A549 (cell line): ENCODE measurements at regions of chr15 and their contacts with region 1.

Region 1: DNA sequence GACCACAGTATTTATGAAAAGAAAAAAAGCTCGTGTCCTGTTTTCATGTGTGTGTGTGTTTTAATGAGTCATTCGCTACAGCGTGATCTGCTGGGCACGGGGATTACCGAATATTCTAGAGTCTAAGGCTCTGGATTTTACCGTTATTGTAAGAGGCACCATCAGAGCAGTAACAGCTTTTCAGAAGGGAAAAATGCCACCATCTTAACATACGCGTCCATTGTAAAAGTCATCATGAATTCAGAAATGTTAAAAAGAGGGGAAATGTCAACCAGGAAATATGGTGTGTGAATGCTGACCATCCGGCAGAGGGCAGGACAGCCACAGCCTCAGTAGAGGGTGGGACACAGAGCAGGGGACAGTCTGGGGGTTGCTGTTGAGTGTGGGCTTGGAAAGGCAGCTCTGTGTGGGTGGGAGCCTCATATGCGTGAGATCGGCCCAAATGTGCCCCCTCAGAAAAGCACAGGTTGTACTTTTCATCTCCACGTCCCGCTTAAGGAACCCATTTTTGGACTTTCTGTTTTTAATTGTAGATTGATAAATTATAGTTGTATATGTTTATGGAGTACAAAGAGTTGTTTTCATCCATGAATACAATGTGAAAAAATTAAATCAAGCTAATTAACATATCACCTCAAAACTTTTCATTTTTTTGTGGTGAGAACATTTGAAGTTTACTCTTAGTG is 69.6 kb downstream of the ASB7 start:
- DNase-seq: peak; percentile 69 to 84
- ATAC-seq: peak; percentile 97 to 99
- H3K4me3 ChIP-seq: peak overlapping the region; percentile 33
- H3K27ac ChIP-seq: peak overlapping the region; percentile 68 to 73
- H3K4me1 ChIP-seq: peaks cover 5% of the 10 kb centered on the region
- CTCF ChIP-seq: peak; percentile 95
- EP300 ChIP-seq: no peak
- POLR2A ChIP-seq: no peak
- RAD21 ChIP-seq: peak; percentile 99

Region 2: GRCh38 chr15:100580414-100580813 is 91.6 kb before region 1 on chr15:
- CTCF ChIA-PET with region 1: no interaction called
- POLR2A ChIA-PET with region 1: no interaction called
- DNase-seq: no peak
- ATAC-seq: no peak
- H3K4me3 ChIP-seq: no peak overlapping the region
- H3K27ac ChIP-seq: no peak overlapping the region
- H3K4me1 ChIP-seq: no peaks in the 10 kb centered on the region
- CTCF ChIP-seq: no peak
- EP300 ChIP-seq: no peak
- POLR2A ChIP-seq: no peak
- RAD21 ChIP-seq: no peak

Region 3: DNA sequence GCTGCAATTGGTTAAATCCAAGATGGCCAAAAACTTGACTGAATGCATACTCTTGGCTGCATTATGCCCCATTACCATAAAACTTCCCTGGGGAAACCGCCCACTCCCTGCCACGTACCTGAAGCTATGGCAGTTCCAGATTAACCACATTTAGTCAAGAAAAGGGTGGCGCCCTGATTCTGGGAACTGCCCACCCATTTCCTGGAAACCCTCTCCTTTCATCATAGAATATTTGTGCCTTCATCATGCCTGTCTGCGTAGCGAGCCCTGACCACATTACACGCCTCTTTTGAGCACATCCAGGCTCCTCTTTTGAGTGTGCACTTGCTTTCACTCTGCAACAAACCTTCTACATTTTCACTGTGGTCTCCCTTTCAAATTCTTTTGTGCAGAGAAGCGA is 75.2 kb before region 1 on chr15:
- CTCF ChIA-PET with region 1: no interaction called
- POLR2A ChIA-PET with region 1: no interaction called
- DNase-seq: no peak
- ATAC-seq: no peak
- H3K4me3 ChIP-seq: no peak overlapping the region
- H3K27ac ChIP-seq: no peak overlapping the region
- H3K4me1 ChIP-seq: peaks cover 7% of the 10 kb centered on the region; the same call in 2 of the 3 replicates
- CTCF ChIP-seq: no peak
- EP300 ChIP-seq: no peak
- POLR2A ChIP-seq: no peak
- RAD21 ChIP-seq: no peak

Region 4: GRCh38 chr15:100686725-100687473 is 14.9 kb after region 1 on chr15:
- CTCF ChIA-PET with region 1: interaction called, 29 read pairs
- POLR2A ChIA-PET with region 1: no interaction called
- DNase-seq: no peak
- ATAC-seq: no peak
- H3K4me3 ChIP-seq: no peak overlapping the region
- H3K27ac ChIP-seq: no peak overlapping the region
- H3K4me1 ChIP-seq: 0 out of 3 replicates have a peak, but pooled peaks cover 4% of the 10 kb centered on the region
- CTCF ChIP-seq: no peak
- EP300 ChIP-seq: no peak
- POLR2A ChIP-seq: no peak
- RAD21 ChIP-seq: no peak

Region 5: GRCh38 chr15:100733101-100733788 is 61.2 kb after region 1 on chr15:
- CTCF ChIA-PET with region 1: interaction called, 15 read pairs
- POLR2A ChIA-PET with region 1: no interaction called
- DNase-seq: peak in 1 of 2 experiments; percentile 36
- ATAC-seq: peak; percentile 26 to 66; a peak in 3 of 6 replicates
- H3K4me3 ChIP-seq: no peak overlapping the region
- H3K27ac ChIP-seq: peak overlapping the region in 1 of 2 experiments; percentile 52; a peak in 3 of 6 replicates
- H3K4me1 ChIP-seq: peaks cover 19% of the 10 kb centered on the region
- CTCF ChIP-seq: no peak
- EP300 ChIP-seq: no peak
- POLR2A ChIP-seq: no peak
- RAD21 ChIP-seq: no peak

Region 6: GRCh38 chr15:100842756-100843725 is 171.0 kb after region 1 on chr15:
- CTCF ChIA-PET with region 1: interaction called, 13 read pairs
- POLR2A ChIA-PET with region 1: no interaction called
- DNase-seq: no peak
- ATAC-seq: peak in 1 of 2 experiments; percentile 40; a peak in 1 of 6 replicates
- H3K4me3 ChIP-seq: no peak overlapping the region
- H3K27ac ChIP-seq: no peak overlapping the region; a peak in 1 of 6 replicates
- H3K4me1 ChIP-seq: peaks cover 6% of the 10 kb centered on the region; the same call in 1 of the 3 replicates
- CTCF ChIP-seq: no peak
- EP300 ChIP-seq: no peak
- POLR2A ChIP-seq: no peak
- RAD21 ChIP-seq: no peak

Region 7: DNA sequence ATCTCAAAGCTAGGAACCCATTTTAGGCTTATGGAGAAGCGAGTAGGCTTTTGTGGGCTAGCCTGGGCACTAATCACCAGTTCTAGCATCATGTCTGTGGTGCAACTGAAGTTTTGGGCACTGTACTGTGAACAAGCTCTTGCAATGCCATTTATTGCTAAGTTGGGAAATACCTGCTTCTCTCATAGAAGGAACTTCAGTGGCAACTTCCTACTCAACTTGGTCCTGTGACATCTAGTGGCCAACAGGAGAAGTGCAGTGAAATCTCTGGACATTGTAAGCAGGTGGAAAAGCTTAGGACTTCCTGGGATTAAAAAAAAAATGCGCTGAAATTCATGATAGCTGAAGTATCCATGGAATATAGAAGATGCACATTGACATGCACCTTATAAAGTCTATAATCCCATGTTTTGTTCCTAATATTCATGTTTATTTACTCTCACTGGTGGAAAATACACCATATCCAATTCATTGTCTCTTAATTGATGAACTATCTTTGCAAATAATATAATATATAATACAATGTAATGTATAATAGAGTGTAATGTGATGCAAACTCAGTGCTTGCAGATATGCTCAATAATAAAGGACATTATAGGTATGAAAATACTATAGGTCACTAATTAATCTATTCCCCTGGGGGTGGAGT is 201.2 kb after region 1 on chr15:
- CTCF ChIA-PET with region 1: interaction called, 117 read pairs
- POLR2A ChIA-PET with region 1: no interaction called
- DNase-seq: peak; percentile 88 to 91
- ATAC-seq: peak; percentile 72 to 87
- H3K4me3 ChIP-seq: no peak overlapping the region
- H3K27ac ChIP-seq: no peak overlapping the region
- H3K4me1 ChIP-seq: no peaks in the 10 kb centered on the region
- CTCF ChIP-seq: peak; percentile 91
- EP300 ChIP-seq: no peak
- POLR2A ChIP-seq: no peak
- RAD21 ChIP-seq: peak; percentile 80 to 89

Region 8: DNA sequence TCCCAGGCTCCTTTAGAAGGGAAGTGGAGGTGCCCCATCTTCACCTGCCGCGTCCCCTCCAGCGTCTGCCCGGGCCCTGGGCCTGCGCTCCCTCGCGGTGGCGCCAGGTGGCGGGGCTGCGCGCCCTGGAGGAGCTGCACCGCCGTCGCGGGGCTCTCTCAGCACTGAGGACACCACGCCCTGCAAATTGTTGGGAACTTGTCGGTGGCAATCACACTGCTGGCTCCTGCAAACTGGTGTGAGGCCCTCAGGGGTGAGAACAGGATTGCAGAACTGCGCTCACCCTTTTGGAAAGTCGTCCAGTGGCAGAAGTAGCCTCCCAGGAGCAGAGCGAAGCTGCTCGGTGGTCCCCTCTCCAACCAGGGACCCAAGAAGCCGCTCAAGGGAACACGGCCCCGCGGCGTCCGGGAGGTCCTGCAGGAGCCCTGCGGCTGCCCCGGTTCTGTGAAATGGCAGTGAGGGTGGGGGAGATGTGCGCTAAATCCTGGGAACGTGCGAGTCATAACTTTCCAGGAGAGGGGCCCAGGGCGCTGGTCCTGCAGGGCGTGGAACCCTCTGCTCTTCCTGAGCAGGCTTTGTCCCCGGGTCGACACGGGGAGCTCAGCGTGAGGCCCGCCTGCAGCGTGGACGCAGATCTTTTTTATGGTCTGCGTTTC is 246.2 kb after region 1 on chr15:
- CTCF ChIA-PET with region 1: interaction called, 15 read pairs
- POLR2A ChIA-PET with region 1: no interaction called
- DNase-seq: peak; percentile 92 to 97
- ATAC-seq: peak; percentile 81 to 94
- H3K4me3 ChIP-seq: peak overlapping the region; percentile 79
- H3K27ac ChIP-seq: peak overlapping the region; percentile 94 to 95
- H3K4me1 ChIP-seq: peaks cover 17% of the 10 kb centered on the region
- CTCF ChIP-seq: peak; percentile 97
- EP300 ChIP-seq: no peak
- POLR2A ChIP-seq: peak; percentile 55
- RAD21 ChIP-seq: peak; percentile 90 to 97